A673 (cell line): ENCODE measurements at regions of chr3 and their contacts with region 1.

Region 1: DNA sequence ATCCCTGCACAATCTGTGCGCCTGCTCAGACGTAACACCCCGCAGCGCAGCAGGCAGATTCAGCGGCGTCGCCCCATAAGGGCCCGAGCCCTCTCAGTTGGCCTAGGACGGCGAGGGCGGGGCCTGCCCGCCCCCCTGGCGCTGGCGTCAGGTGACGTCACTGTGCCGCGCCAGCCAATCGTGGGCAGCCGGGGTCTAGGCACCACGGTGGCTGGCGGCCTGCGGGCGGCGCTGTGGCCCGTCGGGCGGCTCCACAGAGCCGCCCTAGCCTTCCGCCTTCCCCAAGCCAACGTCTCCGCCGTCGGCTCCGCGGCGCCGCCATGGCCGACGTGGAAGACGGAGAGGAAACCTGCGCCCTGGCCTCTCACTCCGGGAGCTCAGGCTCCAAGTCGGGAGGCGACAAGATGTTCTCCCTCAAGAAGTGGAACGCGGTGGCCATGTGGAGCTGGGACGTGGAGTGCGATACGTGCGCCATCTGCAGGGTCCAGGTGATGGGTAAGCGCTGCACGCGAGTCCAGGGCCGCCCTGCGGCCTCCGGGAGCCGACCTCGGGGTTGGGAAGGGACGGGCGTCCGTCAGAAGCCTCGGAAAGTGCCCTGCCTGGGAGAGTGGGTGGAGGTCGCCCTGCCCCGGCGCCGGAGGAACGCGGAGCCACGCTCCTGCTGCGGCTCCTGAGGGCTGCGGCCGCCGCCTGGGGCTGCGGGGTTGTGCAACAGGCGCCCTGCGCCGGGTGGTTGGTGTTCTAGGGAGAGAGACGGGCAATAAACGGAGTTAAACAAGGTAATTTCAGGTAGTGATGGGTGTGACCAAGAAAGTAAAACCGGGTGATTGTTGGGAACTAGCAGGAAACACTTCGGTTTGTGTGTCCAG is at the start of gene RNF7:
- DNase-seq: peak; percentile 98
- H3K4me3 ChIP-seq: peak within 1 kb of the TSS; percentile 87
- H3K27ac ChIP-seq: peak within 1 kb of the TSS; percentile 92
- H3K4me1 ChIP-seq: peaks cover 18% of the 10 kb centered on the region
- H3K27me3 ChIP-seq: no peaks in the 10 kb centered on the region
- CTCF ChIP-seq: peak; percentile 82
- total RNA-seq, gene RNF7: 109 and 123 TPM in 2 replicates

Region 2: DNA sequence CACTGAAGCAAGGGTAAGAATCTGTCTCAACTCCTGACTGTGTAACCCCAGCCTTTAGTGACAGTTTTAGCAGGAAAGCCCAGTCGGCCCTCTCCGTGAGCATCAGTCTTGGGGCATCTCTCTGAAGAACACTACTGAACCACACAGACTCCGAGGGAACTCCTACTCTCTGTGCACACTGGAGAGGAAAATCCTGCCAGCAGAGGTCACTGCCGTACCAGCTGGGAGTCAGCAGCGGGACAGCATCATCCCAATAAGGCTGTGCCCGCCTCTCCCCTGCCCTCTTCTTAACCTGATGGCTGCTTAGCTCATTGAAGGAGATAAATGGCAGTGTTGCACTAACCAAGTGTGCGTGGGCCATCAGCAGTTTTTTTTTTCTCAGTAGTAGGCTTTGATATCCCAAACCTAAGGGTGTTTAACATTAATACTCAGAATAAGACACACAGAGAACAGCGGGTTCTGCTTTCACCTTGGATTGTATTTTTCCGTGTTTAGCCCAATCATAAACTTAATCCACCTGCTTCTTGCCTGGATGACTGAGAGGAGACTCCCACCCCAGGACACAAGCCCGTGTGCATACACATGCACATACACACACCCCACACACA is 278.1 kb before region 1 on chr3:
- CTCF ChIA-PET with region 1: no interaction called
- POLR2A ChIA-PET with region 1: no interaction called
- intact Hi-C with region 1: loop called (anchors 10 kb)
- DNase-seq: peak; percentile 89
- H3K4me3 ChIP-seq: no peak overlapping the region
- H3K27ac ChIP-seq: no peak overlapping the region
- H3K4me1 ChIP-seq: no peaks in the 10 kb centered on the region
- H3K27me3 ChIP-seq: no peaks in the 10 kb centered on the region
- CTCF ChIP-seq: peak; percentile 85

Region 3: GRCh38 chr3:141575879-141576743 is 162.1 kb before region 1 on chr3:
- CTCF ChIA-PET with region 1: no interaction called
- POLR2A ChIA-PET with region 1: no interaction called
- intact Hi-C with region 1: loop called (anchors 5 kb)
- DNase-seq: peak; percentile 11
- H3K4me3 ChIP-seq: no peak overlapping the region
- H3K27ac ChIP-seq: no peak overlapping the region
- H3K4me1 ChIP-seq: no peaks in the 10 kb centered on the region
- H3K27me3 ChIP-seq: no peaks in the 10 kb centered on the region
- CTCF ChIP-seq: peak; percentile 63

Region 4: DNA sequence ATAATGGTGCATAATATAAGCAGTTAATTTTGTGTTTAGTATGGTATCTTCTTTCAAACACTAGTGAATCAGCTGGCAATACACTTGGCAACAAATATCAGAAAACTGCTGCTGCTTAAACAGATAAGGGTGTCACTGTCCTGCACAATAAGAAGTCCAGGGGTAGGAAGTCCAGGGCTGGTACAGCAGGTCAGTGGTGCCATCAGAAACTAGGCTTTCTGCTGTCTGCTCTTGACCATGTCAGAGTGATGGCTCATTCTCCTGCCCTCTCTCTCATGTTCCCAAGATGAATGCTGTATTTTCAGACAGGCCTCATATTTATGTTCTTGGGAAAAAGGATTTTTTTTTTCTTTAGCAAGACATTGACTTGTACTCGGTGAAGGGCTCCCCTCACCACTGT is 15.8 kb after region 1 on chr3:
- CTCF ChIA-PET with region 1: no interaction called
- POLR2A ChIA-PET with region 1: no interaction called
- intact Hi-C with region 1: no loop called
- DNase-seq: no peak
- H3K4me3 ChIP-seq: no peak overlapping the region
- H3K27ac ChIP-seq: no peak overlapping the region
- H3K4me1 ChIP-seq: no peaks in the 10 kb centered on the region
- H3K27me3 ChIP-seq: no peaks in the 10 kb centered on the region
- CTCF ChIP-seq: no peak

Region 5: GRCh38 chr3:141875374-141875892 is 137.2 kb after region 1 on chr3:
- CTCF ChIA-PET with region 1: interaction called, 7 read pairs
- POLR2A ChIA-PET with region 1: no interaction called
- intact Hi-C with region 1: loop called (anchors 2 kb)
- DNase-seq: peak; percentile 93
- H3K4me3 ChIP-seq: peak overlapping the region; percentile 99
- H3K27ac ChIP-seq: peak overlapping the region; percentile 97
- H3K4me1 ChIP-seq: peaks cover 23% of the 10 kb centered on the region
- H3K27me3 ChIP-seq: no peaks in the 10 kb centered on the region
- CTCF ChIP-seq: peak; percentile 93

Region 6: DNA sequence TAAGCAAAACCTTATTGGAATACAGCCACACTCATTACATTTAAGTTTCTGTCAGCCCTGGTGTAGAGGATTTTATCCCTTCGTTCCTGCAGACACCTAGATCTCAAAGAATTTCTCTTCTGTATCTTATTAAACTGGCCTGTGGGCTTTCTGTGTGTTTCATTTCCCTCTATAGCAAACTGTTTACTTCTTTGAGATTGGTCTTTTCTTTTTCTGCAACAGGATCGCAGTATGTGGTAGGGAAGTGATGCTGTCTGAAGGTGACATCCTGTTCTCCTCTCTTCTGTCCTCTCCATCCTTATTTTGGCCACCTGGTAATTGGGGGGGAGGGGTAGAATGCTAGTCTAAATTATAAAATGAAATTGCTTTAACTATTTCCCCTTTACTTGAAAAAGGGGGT is 163.7 kb after region 1 on chr3:
- CTCF ChIA-PET with region 1: no interaction called
- POLR2A ChIA-PET with region 1: no interaction called
- intact Hi-C with region 1: no loop called
- DNase-seq: no peak
- H3K4me3 ChIP-seq: no peak overlapping the region
- H3K27ac ChIP-seq: no peak overlapping the region
- H3K4me1 ChIP-seq: no peaks in the 10 kb centered on the region
- H3K27me3 ChIP-seq: no peaks in the 10 kb centered on the region
- CTCF ChIP-seq: no peak

Region 7: DNA sequence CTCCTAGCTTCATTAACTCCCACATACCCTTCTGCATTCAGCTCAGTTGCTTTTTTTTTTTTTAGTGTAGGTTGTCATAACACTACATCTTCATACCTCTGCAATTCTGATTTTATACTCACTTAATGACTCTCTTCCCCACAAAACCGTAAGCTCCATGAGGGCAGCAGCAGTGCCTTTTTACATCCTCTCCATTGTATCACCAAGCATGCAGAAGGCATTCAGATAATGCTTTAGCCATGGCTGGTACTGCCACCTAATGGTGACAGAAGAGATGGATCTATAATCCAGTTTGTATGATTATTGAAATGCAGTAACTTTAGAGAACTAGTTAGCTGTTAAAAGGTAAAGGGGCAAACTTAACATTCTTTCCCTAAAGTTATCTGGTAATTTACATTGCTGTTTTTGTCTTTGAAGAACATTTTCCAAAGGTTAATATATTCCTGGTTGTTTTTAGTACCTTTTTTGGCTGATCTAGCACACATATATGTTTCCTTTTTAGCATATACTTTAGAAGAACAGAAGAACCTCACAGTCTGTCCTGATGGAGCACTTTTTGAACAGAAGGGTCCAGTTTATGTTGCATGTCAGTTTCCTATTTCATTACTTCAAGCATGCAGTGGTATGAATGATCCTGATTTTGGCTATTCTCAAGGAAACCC is 175.0 kb after region 1 on chr3:
- CTCF ChIA-PET with region 1: interaction called, 20 read pairs
- POLR2A ChIA-PET with region 1: no interaction called
- intact Hi-C with region 1: loop called (anchors 5 kb)
- DNase-seq: peak; percentile 78
- H3K4me3 ChIP-seq: no peak overlapping the region
- H3K27ac ChIP-seq: no peak overlapping the region
- H3K4me1 ChIP-seq: peaks cover 27% of the 10 kb centered on the region
- H3K27me3 ChIP-seq: no peaks in the 10 kb centered on the region
- CTCF ChIP-seq: peak; percentile 81

Region 8: GRCh38 chr3:142279965-142280590 is 541.8 kb after region 1 on chr3:
- CTCF ChIA-PET with region 1: no interaction called
- POLR2A ChIA-PET with region 1: no interaction called
- intact Hi-C with region 1: loop called (anchors 10 kb)
- DNase-seq: peak; percentile 85
- H3K4me3 ChIP-seq: no peak overlapping the region
- H3K27ac ChIP-seq: no peak overlapping the region
- H3K4me1 ChIP-seq: no peaks in the 10 kb centered on the region
- H3K27me3 ChIP-seq: no peaks in the 10 kb centered on the region
- CTCF ChIP-seq: peak; percentile 73